Activated CD4-positive, alpha-beta T cell treated with anti-CD3 and anti-CD28 coated beads for 36 hours (primary cell): ENCODE measurements at regions of chr11 and their contacts with region 1.

Region 1: GRCh38 chr11:60985991-60986915 is 14.8 kb downstream of the CD6 start:
- DNase-seq: peak; percentile 97
- ATAC-seq: peak; percentile 76
- H3K4me3 Mint-ChIP-seq: peak overlapping the region; percentile 87
- H3K27ac Mint-ChIP-seq: peak overlapping the region; percentile 96
- H3K4me1 Mint-ChIP-seq: peaks cover 94% of the 10 kb centered on the region
- H3K27me3 Mint-ChIP-seq: no peaks in the 10 kb centered on the region

Region 2: GRCh38 chr11:60786811-60787567 is 199.3 kb before region 1 on chr11:
- CTCF ChIA-PET with region 1: no interaction called
- POLR2A ChIA-PET with region 1: no interaction called
- intact Hi-C with region 1: no loop called
- DNase-seq: no peak
- ATAC-seq: no peak
- H3K4me3 Mint-ChIP-seq: no peak overlapping the region
- H3K27ac Mint-ChIP-seq: no peak overlapping the region
- H3K4me1 Mint-ChIP-seq: no peaks in the 10 kb centered on the region
- H3K27me3 Mint-ChIP-seq: no peaks in the 10 kb centered on the region

Region 3: DNA sequence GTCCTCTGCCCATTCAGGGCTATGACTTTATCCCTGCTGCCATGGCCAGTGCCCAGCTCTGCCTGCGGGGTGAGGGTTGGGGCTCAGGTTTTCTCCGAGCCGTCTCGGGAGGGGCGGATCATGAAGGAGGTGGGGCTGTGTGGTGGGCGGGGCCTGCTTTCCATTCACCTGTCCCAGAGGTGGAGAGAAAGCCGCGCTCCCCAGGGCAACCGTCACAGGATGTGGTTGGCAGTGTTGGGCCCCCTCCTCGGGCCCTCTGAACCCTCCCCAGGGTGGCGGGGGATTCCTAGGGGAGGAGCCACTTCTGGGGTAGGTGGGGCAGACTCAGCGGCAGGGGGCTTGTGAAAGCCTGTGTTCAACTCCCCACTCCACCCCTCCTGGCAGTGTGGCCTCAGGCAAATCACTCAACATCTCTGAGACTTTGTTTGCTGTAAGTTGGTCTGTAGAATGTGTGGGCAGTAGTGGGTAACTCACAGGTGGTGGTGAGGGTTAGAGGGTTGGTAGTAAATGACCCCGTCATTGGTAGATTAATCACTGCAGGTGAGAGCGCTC is 35.5 kb after region 1 on chr11:
- CTCF ChIA-PET with region 1: interaction called, 4 read pairs
- POLR2A ChIA-PET with region 1: interaction called, 16 read pairs
- intact Hi-C with region 1: loop called (anchors 1 to 2 kb)
- DNase-seq: peak; percentile 94
- ATAC-seq: peak; percentile 50
- H3K4me3 Mint-ChIP-seq: peak overlapping the region; percentile 79
- H3K27ac Mint-ChIP-seq: peak overlapping the region; percentile 97
- H3K4me1 Mint-ChIP-seq: peaks cover 92% of the 10 kb centered on the region
- H3K27me3 Mint-ChIP-seq: no peaks in the 10 kb centered on the region

Region 4: DNA sequence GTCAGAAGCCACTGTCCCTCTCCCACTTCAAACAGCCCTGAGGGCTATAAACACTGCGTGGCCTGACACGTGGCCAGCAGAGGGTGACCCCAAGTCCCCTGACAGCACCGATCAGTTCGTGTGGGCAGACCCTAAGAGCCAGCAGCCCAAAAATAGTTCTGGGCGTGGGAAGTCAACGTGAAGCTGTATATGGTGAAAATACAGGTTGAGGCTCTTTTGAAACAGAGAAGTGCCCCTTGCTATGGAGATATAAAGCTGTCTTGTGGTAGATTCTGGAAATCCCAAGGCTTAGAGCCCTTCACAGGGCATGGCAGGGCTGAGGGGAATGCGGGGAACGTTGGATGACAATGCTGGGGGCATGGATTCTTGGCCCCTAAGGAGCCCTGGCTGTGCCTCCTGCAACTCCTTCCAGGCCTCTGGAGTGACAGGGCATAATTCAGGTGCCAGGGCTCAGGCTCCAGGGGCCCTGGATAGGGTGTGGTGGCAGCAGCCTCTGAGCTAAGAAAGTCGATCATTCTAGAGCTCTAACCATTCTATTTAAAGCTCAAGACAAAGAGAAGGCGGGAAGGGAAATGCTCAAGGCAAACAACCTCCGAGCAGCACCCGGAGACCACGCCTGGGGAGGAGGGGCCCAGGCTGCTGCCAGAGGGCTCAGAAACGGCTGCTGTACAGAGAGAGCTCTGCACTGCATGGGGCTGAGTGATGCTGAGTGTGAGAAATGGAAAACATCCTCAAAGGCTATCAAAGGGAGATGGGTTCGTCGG is 55.7 kb after region 1 on chr11:
- CTCF ChIA-PET with region 1: interaction called, 5 read pairs
- POLR2A ChIA-PET with region 1: interaction called, 11 read pairs
- intact Hi-C with region 1: no loop called
- DNase-seq: peak; percentile 92
- ATAC-seq: peak; percentile 94
- H3K4me3 Mint-ChIP-seq: peak overlapping the region; percentile 64
- H3K27ac Mint-ChIP-seq: peak overlapping the region; percentile 91
- H3K4me1 Mint-ChIP-seq: peaks cover 72% of the 10 kb centered on the region
- H3K27me3 Mint-ChIP-seq: no peaks in the 10 kb centered on the region

Region 5: DNA sequence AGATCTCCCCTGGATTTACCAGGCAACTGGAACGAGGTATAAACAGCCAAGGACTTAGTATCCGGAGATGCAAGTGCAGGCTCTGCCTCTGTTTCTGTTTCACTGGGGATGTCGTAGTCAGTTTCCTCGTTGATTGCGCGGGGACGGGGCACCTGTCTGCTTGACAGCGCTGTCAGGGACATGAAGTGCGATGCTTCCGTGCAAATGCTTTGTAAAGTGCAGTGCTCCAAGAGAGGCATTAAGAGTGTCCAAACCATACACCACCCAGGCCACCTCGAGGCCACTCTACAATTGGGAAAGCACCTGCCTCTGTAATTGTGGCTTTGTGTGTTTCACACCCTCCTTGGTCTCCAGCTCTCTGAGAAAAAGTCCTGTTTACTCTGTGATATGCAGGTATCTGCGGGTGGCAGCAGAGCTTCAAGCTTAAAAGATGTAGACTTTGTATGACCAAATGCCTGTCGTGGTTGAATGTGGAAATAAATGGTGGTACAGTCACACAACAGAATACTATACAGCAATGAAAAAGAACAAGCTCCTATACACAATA is 97.4 kb after region 1 on chr11:
- CTCF ChIA-PET with region 1: interaction called, 4 read pairs
- POLR2A ChIA-PET with region 1: interaction called, 7 read pairs
- intact Hi-C with region 1: loop called in 1 of 2 experiments (anchors 5 kb)
- DNase-seq: peak; percentile 86
- ATAC-seq: peak; percentile 66
- H3K4me3 Mint-ChIP-seq: peak overlapping the region; percentile 87
- H3K27ac Mint-ChIP-seq: peak overlapping the region; percentile 99
- H3K4me1 Mint-ChIP-seq: peaks cover 64% of the 10 kb centered on the region
- H3K27me3 Mint-ChIP-seq: no peaks in the 10 kb centered on the region

Region 6: DNA sequence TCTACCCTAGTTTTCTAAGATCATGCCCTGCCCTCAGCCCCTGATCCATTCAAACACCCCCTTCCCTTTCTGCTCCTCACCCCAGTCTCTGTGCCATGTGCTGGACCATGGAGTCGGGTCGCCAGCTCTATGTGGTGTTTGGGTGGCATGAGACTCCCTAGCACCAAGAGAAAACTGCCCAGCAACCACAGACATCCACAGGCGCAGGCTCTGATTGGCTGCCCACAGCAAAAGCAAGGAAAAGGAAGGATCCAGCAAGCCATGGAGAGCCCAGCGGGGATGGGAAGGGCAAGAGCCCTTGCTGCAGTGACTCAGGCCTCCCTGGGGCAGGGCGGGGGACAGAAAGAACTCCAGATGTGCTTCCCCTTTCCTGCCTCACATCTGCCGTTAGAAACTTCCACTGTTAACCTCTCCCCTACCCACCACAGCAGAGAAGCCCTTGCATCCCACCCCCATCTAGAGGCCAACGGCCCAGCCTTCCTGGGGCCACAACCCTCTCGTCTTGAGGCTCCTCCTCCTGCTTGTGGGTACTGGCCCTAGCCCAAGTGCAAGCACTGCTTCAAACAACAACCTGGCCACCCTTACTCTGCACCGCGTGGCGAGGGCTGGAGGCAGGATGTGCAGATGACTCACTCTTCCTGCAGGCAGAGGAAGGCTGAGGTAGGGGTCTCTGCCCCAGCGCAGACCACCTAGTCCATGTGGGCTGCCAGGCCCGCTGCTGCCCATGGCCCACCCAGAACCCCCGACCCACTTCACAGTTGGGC is 1570.0 kb after region 1 on chr11:
- CTCF ChIA-PET with region 1: no interaction called
- POLR2A ChIA-PET with region 1: interaction called, 3 read pairs
- intact Hi-C with region 1: loop called in 1 of 2 experiments (anchors 10 kb)
- DNase-seq: peak; percentile 92
- ATAC-seq: peak; percentile 65
- H3K4me3 Mint-ChIP-seq: peak overlapping the region; percentile 54
- H3K27ac Mint-ChIP-seq: peak overlapping the region; percentile 92
- H3K4me1 Mint-ChIP-seq: peaks cover 98% of the 10 kb centered on the region
- H3K27me3 Mint-ChIP-seq: no peaks in the 10 kb centered on the region